ENCODE measurements at regions of chr14 and their contacts with region 1.

Region 1: DNA sequence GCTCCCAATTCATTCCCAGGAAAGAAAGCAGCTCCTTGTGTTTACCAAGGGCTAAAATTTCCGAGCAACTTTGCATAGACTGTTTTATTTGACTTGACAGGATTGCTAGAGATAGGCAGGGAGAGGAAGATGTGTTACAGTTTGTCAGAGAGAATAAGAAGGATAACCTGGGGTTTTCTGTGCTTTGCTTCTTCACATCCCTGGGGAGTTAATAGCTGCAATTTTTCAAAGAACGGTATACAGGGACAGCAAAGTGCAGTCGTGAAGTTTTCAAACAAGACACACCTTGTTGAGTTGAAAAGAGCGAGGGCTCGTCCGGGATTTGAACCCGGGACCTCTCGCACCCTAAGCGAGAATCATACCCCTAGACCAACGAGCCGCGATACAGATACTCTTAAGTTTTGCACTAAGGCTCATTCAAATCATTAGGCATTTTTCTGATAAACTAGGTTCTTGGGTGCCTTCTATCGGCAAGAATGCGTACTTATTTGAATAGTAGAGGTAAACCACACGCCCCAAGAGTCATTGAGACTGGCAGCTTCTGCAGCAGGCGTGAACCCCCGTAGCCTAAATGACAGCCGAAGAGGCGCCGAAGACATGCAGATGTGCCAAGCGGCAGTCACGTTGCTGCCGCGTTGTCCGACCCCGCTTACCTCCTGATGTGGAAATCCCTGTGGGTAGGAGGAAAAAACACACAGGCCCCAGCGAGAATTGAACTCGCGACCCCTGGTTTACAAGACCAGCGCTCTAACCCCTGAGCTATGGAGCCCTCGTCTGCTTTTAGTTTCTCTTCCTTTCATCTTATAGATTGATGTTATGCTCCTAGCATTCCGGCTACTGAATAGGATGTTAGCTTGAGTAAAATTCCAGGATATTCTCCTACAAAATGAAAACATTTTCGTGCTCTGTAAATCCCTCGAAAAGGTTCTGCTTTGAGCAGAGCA is 22.2 kb upstream of the RNASE12 start:
- DNase-seq: peak; percentile 72 to 88 (median 81)
- ATAC-seq: peak; percentile 71 to 86 (median 80)
- H3K4me3 ChIP-seq: peak overlapping the region in 3 of 4 donors; percentile 13 to 50 (median 36)
- H3K27ac ChIP-seq: peak overlapping the region in 3 of 4 donors; percentile 6 to 75 (median 67)
- H3K4me1 ChIP-seq: peaks cover 0 to 8% (median 6%) of the 10 kb centered on the region in 3 donors
- H3K27me3 ChIP-seq: no peaks in the 10 kb centered on the region
- CTCF ChIP-seq: peak; percentile 47 to 61 (median 51)

Region 2: GRCh38 chr14:20215196-20215595 is 398.2 kb before region 1 on chr14:
- intact Hi-C with region 1: no loop called
- DNase-seq: no peak
- ATAC-seq: no peak
- H3K4me3 ChIP-seq: no peak overlapping the region
- H3K27ac ChIP-seq: no peak overlapping the region
- H3K4me1 ChIP-seq: no peaks in the 10 kb centered on the region
- H3K27me3 ChIP-seq: no peaks in the 10 kb centered on the region
- CTCF ChIP-seq: no peak

Region 3: DNA sequence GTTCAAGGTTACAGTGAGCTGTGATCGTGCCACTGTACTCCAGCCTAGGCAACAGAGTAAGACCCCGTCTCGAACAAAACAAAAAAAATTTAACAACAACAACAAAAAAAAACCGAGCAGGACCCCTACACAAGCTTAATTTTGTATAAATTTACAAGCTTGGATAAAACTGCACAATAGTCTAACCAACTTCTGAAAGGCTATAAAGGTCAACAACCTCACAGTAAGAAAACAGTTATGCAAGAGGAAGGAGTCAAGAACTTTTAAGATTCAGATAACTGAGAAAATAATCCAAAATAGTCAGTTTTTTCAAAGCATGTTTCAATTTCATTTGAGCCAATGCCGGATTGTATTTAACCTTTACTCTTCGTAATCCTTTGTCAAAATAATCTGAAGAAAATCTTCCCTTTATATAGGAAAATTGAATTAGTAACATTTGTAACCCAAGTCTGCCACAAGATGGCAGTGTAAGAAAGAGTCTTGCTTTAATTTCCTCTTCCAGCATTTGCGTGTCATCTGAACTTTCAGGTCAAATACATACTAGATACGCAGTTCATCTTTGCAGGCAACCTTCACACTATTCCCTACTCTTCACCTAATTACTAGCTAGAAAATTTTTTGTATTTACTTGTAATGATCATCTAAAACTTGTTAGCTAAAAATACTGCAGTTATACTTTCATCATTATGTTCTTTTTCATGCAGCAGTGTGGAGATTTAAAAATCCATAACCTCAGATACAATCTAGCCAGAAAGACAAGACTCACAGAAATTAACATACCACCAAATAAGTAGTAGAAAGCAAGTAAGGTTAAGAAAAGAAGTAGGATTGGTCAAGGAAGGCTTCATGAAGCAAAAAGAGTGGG is 286.1 kb before region 1 on chr14:
- intact Hi-C with region 1: loop called (anchors 5 to 10 kb)
- DNase-seq: no peak
- ATAC-seq: peak; percentile 69 to 88 (median 84)
- H3K4me3 ChIP-seq: no peak overlapping the region
- H3K27ac ChIP-seq: no peak overlapping the region
- H3K4me1 ChIP-seq: peaks cover 0 to 3% (median 3%) of the 10 kb centered on the region in 3 donors
- H3K27me3 ChIP-seq: no peaks in the 10 kb centered on the region
- CTCF ChIP-seq: peak; percentile 25 to 66 (median 60)

Region 4: GRCh38 chr14:20434701-20435581 is 178.4 kb before region 1 on chr14:
- intact Hi-C with region 1: no loop called
- DNase-seq: peak in 1 of 6 donors; percentile 54
- ATAC-seq: peak in 2 of 4 donors; percentile 19 to 32
- H3K4me3 ChIP-seq: peak overlapping the region in 2 of 4 donors; percentile 13 to 20
- H3K27ac ChIP-seq: no peak overlapping the region
- H3K4me1 ChIP-seq: no peaks in the 10 kb centered on the region
- H3K27me3 ChIP-seq: no peaks in the 10 kb centered on the region
- CTCF ChIP-seq: no peak

Region 5: DNA sequence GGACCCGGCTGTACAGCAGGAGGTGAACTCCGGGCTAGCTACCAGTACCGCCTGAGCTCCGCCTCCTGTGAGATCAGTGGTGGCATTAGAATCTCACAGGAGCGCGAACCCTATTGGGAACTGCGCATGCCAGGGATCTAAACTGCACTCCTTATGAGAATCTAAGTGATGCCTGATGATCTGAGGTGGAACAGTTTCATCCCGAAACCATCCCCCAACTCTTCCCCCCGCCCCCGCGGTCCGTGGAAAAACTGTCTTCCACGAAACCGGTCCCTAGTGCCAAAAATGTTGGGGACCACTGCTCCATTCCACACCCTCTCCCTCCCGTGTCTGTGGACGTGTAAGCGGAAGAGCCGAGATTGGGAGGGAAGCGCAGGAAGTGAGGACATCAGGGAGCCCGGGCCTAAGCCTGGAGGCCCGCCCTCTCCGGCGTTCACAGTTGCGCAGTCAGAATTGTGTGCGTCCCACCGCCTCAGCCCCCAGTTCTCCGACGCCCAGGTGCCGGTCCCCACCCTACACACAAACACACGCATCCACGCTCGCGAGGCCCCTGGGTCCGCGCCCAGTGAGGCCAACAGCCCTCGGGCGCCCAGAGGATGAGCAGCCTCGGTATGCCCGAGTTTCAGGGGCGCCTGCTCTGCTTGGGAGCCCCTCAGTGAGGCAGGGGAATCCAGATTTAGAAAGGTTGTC is 69.2 kb after region 1 on chr14:
- intact Hi-C with region 1: loop called in 1 of 3 experiments (anchors 10 kb)
- DNase-seq: peak; percentile 81 to 90 (median 83)
- ATAC-seq: peak; percentile 64 to 78 (median 67)
- H3K4me3 ChIP-seq: peak overlapping the region; percentile 54 to 65 (median 56)
- H3K27ac ChIP-seq: peak overlapping the region; percentile 96 to 99 (median 99)
- H3K4me1 ChIP-seq: peaks cover 10 to 29% (median 13%) of the 10 kb centered on the region in 3 donors
- H3K27me3 ChIP-seq: no peaks in the 10 kb centered on the region
- CTCF ChIP-seq: no peak